Activated CD4-positive, alpha-beta memory T cell treated with anti-CD3 and anti-CD28 coated beads, Interleukin-2, amount 10 ng/mL, durations not matched to agents 7 days and 5 days (primary cell): ENCODE measurements at regions of chr4 and their contacts with region 1.

Region 1: GRCh38 chr4:99563310-99564186 is at the start of gene TRMT10A:
- DNase-seq: peak; percentile 95
- H3K4me3 Mint-ChIP-seq: peak within 1 kb of the TSS; percentile 94
- H3K27ac Mint-ChIP-seq: peak within 1 kb of the TSS; percentile 99
- H3K4me1 Mint-ChIP-seq: peaks cover 31% of the 10 kb centered on the region
- H3K27me3 Mint-ChIP-seq: peaks cover 13% of the 10 kb centered on the region
- total RNA-seq, gene TRMT10A: 8.5 to 10.4 TPM

Region 2: DNA sequence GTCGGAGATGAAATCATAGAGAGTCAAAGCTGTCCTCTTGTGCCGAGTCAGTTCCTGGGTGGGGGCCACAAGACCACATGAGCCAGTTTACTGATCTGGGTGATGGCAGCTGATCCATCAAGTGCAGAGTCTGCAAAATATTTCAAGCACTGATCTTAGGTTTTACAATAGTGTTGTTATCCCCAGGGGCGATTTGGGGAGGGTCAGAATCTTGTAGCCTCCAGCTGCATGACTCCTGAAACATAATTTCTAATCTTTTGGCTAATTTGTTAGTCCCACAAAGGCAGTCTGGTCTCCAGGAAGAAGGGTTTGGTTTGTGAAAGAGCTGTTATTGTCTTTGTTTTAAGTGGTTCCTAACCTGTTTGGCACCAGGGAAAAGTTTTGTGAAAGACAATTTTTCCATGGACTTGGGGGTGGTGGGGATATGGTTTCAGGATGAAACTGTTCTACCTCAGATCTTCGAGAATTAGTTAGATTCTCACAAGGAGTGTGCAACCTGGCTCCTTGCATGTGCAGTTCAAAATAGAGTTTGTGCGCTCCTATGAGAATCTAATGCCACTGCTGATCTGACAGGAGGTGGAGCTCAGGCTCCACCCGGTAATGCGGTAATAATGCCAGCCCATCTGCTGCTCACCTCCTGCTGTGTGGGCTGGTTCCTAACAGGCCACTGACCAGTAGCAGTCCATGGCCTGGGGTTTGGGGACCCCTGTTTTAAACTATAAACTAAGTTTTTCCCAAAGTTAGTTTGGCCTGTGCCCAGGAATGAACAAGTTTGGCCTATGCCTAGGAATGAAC is 538.9 kb before region 1 on chr4:
- CTCF ChIA-PET with region 1: no interaction called
- POLR2A ChIA-PET with region 1: no interaction called
- DNase-seq: no peak
- H3K4me3 Mint-ChIP-seq: no peak overlapping the region
- H3K27ac Mint-ChIP-seq: no peak overlapping the region
- H3K4me1 Mint-ChIP-seq: peaks cover 21% of the 10 kb centered on the region
- H3K27me3 Mint-ChIP-seq: no peaks in the 10 kb centered on the region

Region 3: GRCh38 chr4:99529228-99529627 is 34.3 kb before region 1 on chr4:
- CTCF ChIA-PET with region 1: no interaction called
- POLR2A ChIA-PET with region 1: no interaction called
- DNase-seq: no peak
- H3K4me3 Mint-ChIP-seq: no peak overlapping the region
- H3K27ac Mint-ChIP-seq: no peak overlapping the region
- H3K4me1 Mint-ChIP-seq: no peaks in the 10 kb centered on the region
- H3K27me3 Mint-ChIP-seq: peaks cover 32% of the 10 kb centered on the region

Region 4: DNA sequence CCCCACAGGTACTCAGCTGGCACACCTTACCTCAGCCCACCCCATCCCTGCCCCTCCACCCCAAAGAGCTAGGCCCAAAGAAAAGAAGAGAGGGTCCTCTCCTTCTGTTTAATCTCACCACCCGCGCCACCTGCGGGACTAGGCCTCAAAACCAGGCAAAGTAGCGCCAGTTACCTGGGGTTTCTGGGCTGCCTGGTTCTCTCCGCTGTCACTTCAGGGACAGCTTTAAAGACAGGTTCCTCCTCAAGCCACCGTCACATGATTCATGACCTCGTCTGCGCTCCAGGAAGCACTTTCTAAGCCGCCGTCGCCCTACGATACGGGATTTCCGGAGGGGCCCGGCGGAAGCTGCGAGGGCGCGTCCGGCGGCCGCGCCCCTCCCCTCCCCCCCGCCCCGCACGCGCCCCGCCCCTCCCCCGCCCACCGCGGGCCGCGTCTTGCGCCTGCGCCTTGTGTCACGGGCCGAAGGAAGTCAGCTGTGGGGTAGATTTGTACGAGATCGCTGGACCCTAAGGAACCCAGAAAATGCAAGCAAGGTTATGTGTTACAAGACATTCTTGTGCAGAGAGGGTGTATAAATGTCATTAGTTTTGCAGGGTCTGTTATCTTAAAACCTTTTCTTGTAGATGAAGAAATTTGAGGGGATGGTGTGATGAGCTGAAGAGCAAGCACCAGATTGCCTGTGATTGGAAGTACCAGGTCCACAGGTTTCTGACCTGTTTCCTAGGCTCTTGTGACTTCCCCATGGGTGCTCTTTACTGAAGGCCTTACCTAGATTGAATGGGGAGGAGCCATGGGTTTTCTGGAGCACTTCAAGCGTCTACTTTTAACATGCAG is 330.8 kb after region 1 on chr4 and contains the start of gene LAMTOR3:
- CTCF ChIA-PET with region 1: interaction called, 3 read pairs
- POLR2A ChIA-PET with region 1: interaction called, 17 read pairs
- DNase-seq: peak; percentile 92
- H3K4me3 Mint-ChIP-seq: peak within 1 kb of the TSS; percentile 98
- H3K27ac Mint-ChIP-seq: peak within 1 kb of the TSS; percentile 91
- H3K4me1 Mint-ChIP-seq: peaks cover 42% of the 10 kb centered on the region
- H3K27me3 Mint-ChIP-seq: no peaks in the 10 kb centered on the region
- total RNA-seq, gene LAMTOR3: 28.1 to 29.2 TPM